ENCODE measurements at regions of chr2 and their contacts with region 1.

Region 1: DNA sequence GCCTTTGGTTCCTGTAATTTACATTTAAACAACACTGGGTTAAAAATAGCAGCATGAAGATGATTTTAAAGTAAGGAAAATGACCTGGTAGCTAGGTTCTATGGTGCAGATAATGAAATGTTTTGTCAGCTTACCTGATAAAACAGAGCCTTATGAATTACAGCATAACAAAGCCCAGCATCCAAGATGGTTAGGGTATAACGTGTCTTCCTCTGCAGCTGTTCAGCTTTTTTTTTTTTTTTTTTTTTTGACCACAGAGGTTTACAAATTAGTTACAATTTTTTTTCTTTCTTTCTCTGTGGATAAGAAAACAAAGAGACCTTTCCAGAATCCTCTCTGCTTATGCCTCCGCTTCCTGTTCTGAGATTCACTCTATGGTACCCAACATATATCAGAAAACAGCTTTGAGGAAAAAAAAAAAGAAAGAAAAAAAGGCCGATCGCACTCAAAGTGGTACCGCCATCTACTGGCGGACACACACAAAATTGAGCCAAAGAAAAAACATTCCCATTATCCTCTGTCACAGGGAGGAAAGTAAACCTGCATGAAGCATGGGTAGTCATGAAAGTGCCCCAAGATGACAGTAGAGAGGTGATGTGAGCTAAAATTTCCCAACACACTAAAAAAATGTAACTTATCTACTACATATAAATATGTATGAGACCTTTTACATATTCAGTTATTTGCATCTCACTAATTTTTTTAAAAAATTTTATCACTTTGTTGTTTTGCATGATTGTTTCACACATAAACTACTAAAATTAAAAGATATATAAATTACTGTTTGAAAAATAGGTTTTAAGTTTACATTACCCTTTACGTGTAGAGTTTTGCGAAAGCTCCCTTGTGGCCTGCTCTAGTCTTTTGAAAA is at the start of gene SCN3A:
- DNase-seq: peak; percentile 17
- ATAC-seq: peak; percentile 86
- H3K4me3 Mint-ChIP-seq: no peak within 1 kb of the TSS
- H3K27ac Mint-ChIP-seq: no peak within 1 kb of the TSS
- H3K4me1 Mint-ChIP-seq: peaks cover 4% of the 10 kb centered on the region
- H3K27me3 Mint-ChIP-seq: no peaks in the 10 kb centered on the region
- CTCF ChIP-seq: peak; percentile 48
- total RNA-seq, gene SCN3A: 0.04 TPM in 1 of 3 replicates, not detected in the others

Region 2: DNA sequence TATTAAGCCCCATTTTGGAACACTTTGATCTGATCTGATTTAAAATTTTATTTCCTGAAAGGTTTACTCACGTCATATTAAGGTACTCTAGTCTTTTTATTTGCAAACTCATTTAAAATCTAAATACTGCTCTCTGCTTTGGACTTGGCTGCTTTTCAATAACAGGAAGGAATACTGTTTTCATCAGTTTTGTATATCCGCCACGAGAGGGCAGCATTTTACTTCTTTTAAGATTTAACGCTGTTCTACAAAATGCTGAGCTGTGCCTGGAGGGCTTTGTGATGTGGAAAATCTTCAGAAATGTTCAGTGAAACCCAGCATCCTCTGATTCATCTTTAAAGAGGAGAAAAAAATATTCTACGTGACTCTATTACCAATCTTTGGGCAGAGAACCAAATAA is 211.1 kb before region 1 on chr2:
- CTCF ChIA-PET with region 1: interaction called, 14 read pairs
- POLR2A ChIA-PET with region 1: no interaction called
- DNase-seq: peak; percentile 38
- ATAC-seq: peak; percentile 81
- H3K4me3 Mint-ChIP-seq: no peak overlapping the region
- H3K27ac Mint-ChIP-seq: no peak overlapping the region
- H3K4me1 Mint-ChIP-seq: peaks cover 12% of the 10 kb centered on the region
- H3K27me3 Mint-ChIP-seq: no peaks in the 10 kb centered on the region
- CTCF ChIP-seq: peak; percentile 59; the same call in 1 of the 2 replicates

Region 3: GRCh38 chr2:165015052-165015642 is 188.8 kb before region 1 on chr2:
- CTCF ChIA-PET with region 1: interaction called, 82 read pairs
- POLR2A ChIA-PET with region 1: no interaction called
- DNase-seq: peak; percentile 75
- ATAC-seq: peak; percentile 51
- H3K4me3 Mint-ChIP-seq: no peak overlapping the region
- H3K27ac Mint-ChIP-seq: no peak overlapping the region
- H3K4me1 Mint-ChIP-seq: peaks cover 8% of the 10 kb centered on the region
- H3K27me3 Mint-ChIP-seq: no peaks in the 10 kb centered on the region
- CTCF ChIP-seq: peak; percentile 76

Region 4: DNA sequence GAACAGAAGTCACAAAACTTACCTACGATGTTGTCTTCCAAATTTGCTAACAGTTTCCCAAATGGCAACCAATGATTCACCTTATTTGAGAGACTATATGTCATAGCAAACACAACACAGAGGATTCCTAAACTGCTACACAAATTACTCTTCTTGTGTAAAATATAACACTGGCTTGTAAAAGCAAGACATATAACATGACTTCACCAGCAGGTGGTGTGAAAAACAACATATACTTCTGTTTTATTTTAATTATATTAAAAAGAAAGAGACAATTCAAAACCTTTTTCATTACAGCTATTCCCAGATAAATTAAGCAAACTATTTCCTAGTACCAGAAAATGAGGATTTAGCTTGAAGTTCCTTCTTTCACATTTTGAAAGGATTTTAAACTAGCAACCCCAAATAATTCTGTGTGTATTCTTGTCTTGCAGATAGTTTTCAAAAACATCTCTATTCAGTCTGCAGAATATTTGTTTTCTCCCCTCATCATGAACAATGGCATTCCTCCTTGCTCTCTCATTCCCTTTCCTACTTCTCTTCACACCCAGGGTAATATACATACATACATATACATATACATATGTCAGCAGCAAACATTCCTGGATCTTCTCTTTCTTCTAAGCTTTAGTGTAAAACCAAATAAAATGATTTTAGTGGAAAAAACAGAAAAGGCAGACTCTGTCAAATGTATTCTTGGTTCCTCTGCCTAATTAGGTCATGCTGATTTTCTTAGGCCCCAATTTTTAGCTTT is 62.1 kb before region 1 on chr2:
- CTCF ChIA-PET with region 1: interaction called, 10 read pairs
- POLR2A ChIA-PET with region 1: no interaction called
- DNase-seq: no peak
- ATAC-seq: no peak
- H3K4me3 Mint-ChIP-seq: no peak overlapping the region
- H3K27ac Mint-ChIP-seq: no peak overlapping the region; the same call in 1 of the 2 replicates
- H3K4me1 Mint-ChIP-seq: peaks cover 9% of the 10 kb centered on the region
- H3K27me3 Mint-ChIP-seq: no peaks in the 10 kb centered on the region
- CTCF ChIP-seq: no peak

Region 5: GRCh38 chr2:165185633-165186032 is 18.3 kb before region 1 on chr2:
- CTCF ChIA-PET with region 1: interaction called, 17 read pairs
- POLR2A ChIA-PET with region 1: no interaction called
- DNase-seq: no peak
- ATAC-seq: no peak
- H3K4me3 Mint-ChIP-seq: no peak overlapping the region
- H3K27ac Mint-ChIP-seq: no peak overlapping the region
- H3K4me1 Mint-ChIP-seq: no peaks in the 10 kb centered on the region
- H3K27me3 Mint-ChIP-seq: no peaks in the 10 kb centered on the region
- CTCF ChIP-seq: no peak

Region 6: GRCh38 chr2:165191096-165191728 is 12.7 kb before region 1 on chr2:
- CTCF ChIA-PET with region 1: interaction called, 17 read pairs
- POLR2A ChIA-PET with region 1: no interaction called
- DNase-seq: no peak
- ATAC-seq: peak; percentile 62; the same call in 1 of the 2 replicates
- H3K4me3 Mint-ChIP-seq: no peak overlapping the region
- H3K27ac Mint-ChIP-seq: no peak overlapping the region
- H3K4me1 Mint-ChIP-seq: no peaks in the 10 kb centered on the region
- H3K27me3 Mint-ChIP-seq: no peaks in the 10 kb centered on the region
- CTCF ChIP-seq: no peak

Region 7: DNA sequence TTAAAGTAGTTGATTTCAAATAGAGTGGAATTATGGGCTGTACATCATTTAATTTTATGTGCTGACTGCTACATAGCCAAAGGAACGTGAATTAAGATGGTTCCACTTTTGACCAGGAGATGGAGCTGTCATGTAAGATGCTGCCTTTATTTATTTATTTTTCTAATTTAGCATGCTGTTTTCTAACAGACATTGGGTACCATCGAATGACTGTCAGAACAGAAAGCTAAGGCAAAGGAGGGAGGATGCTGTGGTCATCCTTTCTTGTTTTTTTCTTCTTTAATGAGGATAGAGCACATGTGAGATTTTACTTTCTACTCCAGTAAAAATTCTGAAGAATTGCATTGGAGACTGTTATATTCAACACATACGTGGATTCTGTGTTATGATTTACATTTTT is 35.3 kb after region 1 on chr2 and contains the start of gene SCN2A:
- CTCF ChIA-PET with region 1: interaction called, 10 read pairs
- POLR2A ChIA-PET with region 1: no interaction called
- DNase-seq: no peak
- ATAC-seq: peak; percentile 44; the same call in 1 of the 2 replicates
- H3K4me3 Mint-ChIP-seq: no peak within 1 kb of the TSS
- H3K27ac Mint-ChIP-seq: no peak within 1 kb of the TSS
- H3K4me1 Mint-ChIP-seq: peaks cover 4% of the 10 kb centered on the region; the same call in 1 of the 2 replicates
- H3K27me3 Mint-ChIP-seq: no peaks in the 10 kb centered on the region
- CTCF ChIP-seq: peak; percentile 33
- total RNA-seq, gene SCN2A: 0.39 to 0.53 TPM (median 0.44 TPM) in 3 replicates